B cell (primary cell): ENCODE measurements at regions of chr19 and their contacts with region 1.

Region 1: GRCh38 chr19:46600384-46601317 is 479 bp upstream of the CALM3 start:
- DNase-seq: peak; percentile 100
- ATAC-seq: peak; percentile 89
- H3K4me3 ChIP-seq: peak overlapping the region; percentile 64 to 100 (median 99)
- H3K4me3 Mint-ChIP-seq: peak overlapping the region; percentile 100
- H3K27ac ChIP-seq: peak overlapping the region; percentile 98 to 100
- H3K27ac Mint-ChIP-seq: peak overlapping the region; percentile 100
- H3K4me1 ChIP-seq: peaks cover 19 to 30% of the 10 kb centered on the region in 2 donors
- H3K4me1 Mint-ChIP-seq: peaks cover 31% of the 10 kb centered on the region
- H3K27me3 ChIP-seq: no peaks in the 10 kb centered on the region
- H3K27me3 Mint-ChIP-seq: no peaks in the 10 kb centered on the region
- CTCF ChIP-seq: no peak

Region 2: GRCh38 chr19:46634045-46634655 is 33.5 kb after region 1 on chr19:
- CTCF ChIA-PET with region 1: interaction called, 4 read pairs
- POLR2A ChIA-PET with region 1: interaction called, 4 read pairs
- intact Hi-C with region 1: loop called (anchors 1 kb)
- DNase-seq: peak; percentile 98
- ATAC-seq: peak; percentile 74
- H3K4me3 ChIP-seq: peak overlapping the region in 4 of 5 experiments; percentile 35 to 57 (median 52)
- H3K4me3 Mint-ChIP-seq: peak overlapping the region; percentile 82
- H3K27ac ChIP-seq: peak overlapping the region; percentile 73 to 79
- H3K27ac Mint-ChIP-seq: peak overlapping the region; percentile 71
- H3K4me1 ChIP-seq: peaks cover 40 to 52% of the 10 kb centered on the region in 2 donors
- H3K4me1 Mint-ChIP-seq: peaks cover 30% of the 10 kb centered on the region
- H3K27me3 ChIP-seq: peaks cover 0 to 10% (median 2%) of the 10 kb centered on the region in 4 experiments
- H3K27me3 Mint-ChIP-seq: peaks cover 7% of the 10 kb centered on the region
- CTCF ChIP-seq: no peak

Region 3: GRCh38 chr19:46850228-46851203 is 249.9 kb after region 1 on chr19 and contains the start of gene AP2S1:
- CTCF ChIA-PET with region 1: interaction called, 3 read pairs
- POLR2A ChIA-PET with region 1: interaction called, 4 read pairs
- intact Hi-C with region 1: loop called (anchors 2 kb)
- DNase-seq: peak; percentile 95
- ATAC-seq: peak; percentile 93
- H3K4me3 ChIP-seq: peak within 1 kb of the TSS; percentile 59 to 89 (median 82)
- H3K4me3 Mint-ChIP-seq: peak within 1 kb of the TSS; percentile 98
- H3K27ac ChIP-seq: peak within 1 kb of the TSS; percentile 58 to 81
- H3K27ac Mint-ChIP-seq: peak within 1 kb of the TSS; percentile 86
- H3K4me1 ChIP-seq: peaks cover 17 to 24% of the 10 kb centered on the region in 2 donors
- H3K4me1 Mint-ChIP-seq: peaks cover 32% of the 10 kb centered on the region
- H3K27me3 ChIP-seq: no peaks in the 10 kb centered on the region
- H3K27me3 Mint-ChIP-seq: no peaks in the 10 kb centered on the region
- CTCF ChIP-seq: no peak
- total RNA-seq, gene AP2S1: 47.2 and 49.3 TPM in 2 replicates